Common myeloid progenitor, CD34-positive (primary cell): ENCODE measurements at regions of chr3 and their contacts with region 1.

Region 1: DNA sequence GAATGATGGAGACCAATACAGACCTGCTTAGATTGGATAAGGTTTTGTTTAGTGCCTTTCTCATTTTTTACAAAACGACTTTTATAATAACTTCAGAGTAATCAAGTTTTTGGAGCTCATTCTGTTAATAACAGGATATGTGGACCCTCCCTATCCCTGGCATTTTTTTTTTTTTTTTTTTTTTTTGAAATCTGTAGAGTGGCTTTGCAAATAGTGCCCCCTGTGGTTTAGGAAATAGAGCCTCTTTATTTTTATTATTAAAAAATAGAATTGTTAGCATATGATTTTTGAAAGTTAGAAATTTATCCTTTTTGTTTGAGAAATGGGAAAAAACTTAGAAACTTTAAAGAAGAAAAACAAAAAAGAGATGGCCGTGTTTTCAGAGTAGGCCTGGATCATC is 11.4 kb downstream of the SKIL start:
- DNase-seq: peak; percentile 14 to 45 (median 41)
- H3K4me3 ChIP-seq: no peak overlapping the region
- H3K27ac ChIP-seq: no peak overlapping the region
- H3K4me1 ChIP-seq: no peaks in the 10 kb centered on the region
- H3K27me3 ChIP-seq: no peaks in the 10 kb centered on the region

Region 2: DNA sequence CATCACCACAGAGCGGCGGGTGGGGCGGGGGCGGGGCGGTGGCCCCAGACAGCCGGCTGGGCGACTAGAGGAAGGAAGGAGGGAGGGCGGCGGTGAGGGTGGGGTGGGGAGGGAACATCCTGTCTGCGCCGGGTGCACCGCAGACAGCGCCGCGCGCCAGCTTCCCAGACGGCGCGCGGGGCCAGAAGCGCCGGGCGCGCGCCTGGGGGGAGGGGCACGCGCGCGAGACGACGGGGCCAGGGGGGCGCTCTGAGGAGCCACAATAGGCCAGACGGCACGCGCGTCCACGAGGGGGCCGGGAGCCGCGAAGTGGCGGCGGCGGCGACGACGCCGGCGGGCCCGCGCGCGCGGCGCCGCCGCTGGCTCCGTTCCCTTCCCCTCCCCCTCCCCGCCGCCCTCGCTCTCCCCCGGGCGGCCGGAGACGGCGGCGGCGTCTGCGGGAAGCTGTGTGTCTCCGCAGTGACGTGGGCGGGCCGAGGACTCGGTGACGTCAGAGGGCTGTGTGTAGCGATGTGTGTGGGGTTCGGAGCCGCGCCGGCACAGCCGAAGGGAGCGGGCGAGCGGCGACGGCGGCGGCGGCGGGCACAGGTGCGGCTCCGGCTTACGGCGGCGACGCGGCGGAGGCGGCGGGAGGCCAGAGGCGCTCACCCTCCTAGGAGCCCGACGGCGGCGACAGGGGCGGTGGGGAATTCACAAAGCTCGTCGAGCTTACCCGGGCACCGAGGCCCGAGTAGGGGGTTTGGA is 11.6 kb before region 1 on chr3 and contains the start of gene SKIL:
- CTCF ChIA-PET with region 1: interaction called, 5 read pairs
- POLR2A ChIA-PET with region 1: interaction called, 17 read pairs
- DNase-seq: peak; percentile 97 to 98 (median 98)
- H3K4me3 ChIP-seq: peak within 1 kb of the TSS; percentile 69 to 87 (median 80)
- H3K27ac ChIP-seq: peak within 1 kb of the TSS; percentile 90 to 97
- H3K4me1 ChIP-seq: peaks cover 12 to 42% (median 22%) of the 10 kb centered on the region in 4 experiments
- H3K27me3 ChIP-seq: no peaks in the 10 kb centered on the region

Region 3: GRCh38 chr3:170383567-170383966 is 14.6 kb after region 1 on chr3:
- CTCF ChIA-PET with region 1: interaction called, 14 read pairs
- POLR2A ChIA-PET with region 1: no interaction called
- DNase-seq: no peak
- H3K4me3 ChIP-seq: no peak overlapping the region
- H3K27ac ChIP-seq: no peak overlapping the region
- H3K4me1 ChIP-seq: no peaks in the 10 kb centered on the region
- H3K27me3 ChIP-seq: no peaks in the 10 kb centered on the region